ENCODE measurements at regions of chr17 and their contacts with region 1.

Region 1: GRCh38 chr17:42819944-42820535 is 4.0 kb downstream of the BECN1 start:
- DNase-seq: peak; percentile 88
- H3K4me3 Mint-ChIP-seq: no peak overlapping the region
- H3K27ac Mint-ChIP-seq: no peak overlapping the region
- H3K4me1 Mint-ChIP-seq: peaks cover 20% of the 10 kb centered on the region
- H3K27me3 Mint-ChIP-seq: no peaks in the 10 kb centered on the region

Region 2: DNA sequence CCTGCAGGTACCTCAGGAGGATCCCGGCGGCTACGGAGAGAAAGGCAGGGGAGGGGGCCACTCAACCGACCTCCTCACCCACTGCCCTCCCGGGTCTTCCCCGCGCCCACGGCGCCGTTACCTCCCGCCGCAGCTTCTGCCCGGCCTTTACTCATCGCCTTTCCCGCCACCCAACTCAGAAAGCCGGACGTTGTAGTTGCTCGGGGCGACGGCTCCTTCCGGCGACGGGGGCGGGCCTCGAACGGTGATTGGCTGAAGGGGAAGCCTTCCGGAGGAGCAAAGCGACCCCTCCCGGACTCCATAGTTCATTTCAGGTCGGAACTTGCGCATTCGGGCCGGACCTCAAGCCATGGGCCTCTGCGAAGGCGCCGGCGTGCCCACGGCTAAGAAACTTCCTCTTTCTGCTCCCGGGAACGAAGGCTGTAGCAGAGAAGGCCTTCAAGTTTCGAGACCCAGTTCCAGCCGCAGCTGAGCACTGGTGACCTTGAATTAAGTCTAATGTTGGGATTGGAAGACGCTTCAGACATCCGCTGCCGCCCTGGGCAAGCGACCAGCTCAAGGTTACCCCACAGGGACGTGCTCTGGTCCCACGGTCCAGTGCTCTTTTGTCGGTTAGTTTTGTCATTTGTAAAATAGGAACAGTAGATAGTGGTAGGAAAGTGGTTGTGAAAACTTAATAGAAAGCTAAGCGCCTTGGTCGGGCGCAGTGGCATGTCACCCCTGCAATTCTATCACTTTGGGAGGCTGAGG is 242.3 kb before region 1 on chr17 and contains the start of gene PSMC3IP:
- intact Hi-C with region 1: loop called (anchors 5 kb)
- DNase-seq: peak; percentile 98
- H3K4me3 Mint-ChIP-seq: peak within 1 kb of the TSS; percentile 88
- H3K27ac Mint-ChIP-seq: peak within 1 kb of the TSS; percentile 96
- H3K4me1 Mint-ChIP-seq: peaks cover 30% of the 10 kb centered on the region
- H3K27me3 Mint-ChIP-seq: no peaks in the 10 kb centered on the region
- total RNA-seq, gene PSMC3IP: 29.1 and 31.1 TPM in 2 replicates

Region 3: GRCh38 chr17:42609182-42609813 is 210.7 kb before region 1 on chr17 and contains the starts of genes RETREG3 and TUBG1:
- intact Hi-C with region 1: loop called (anchors 1 kb)
- DNase-seq: peak; percentile 100
- H3K4me3 Mint-ChIP-seq: peak within 1 kb of the TSS; percentile 99
- H3K27ac Mint-ChIP-seq: peak within 1 kb of the TSS; percentile 94
- H3K4me1 Mint-ChIP-seq: peaks cover 30% of the 10 kb centered on the region
- H3K27me3 Mint-ChIP-seq: no peaks in the 10 kb centered on the region
- total RNA-seq, gene RETREG3: 35.8 and 38.3 TPM in 2 replicates
- total RNA-seq, gene TUBG1: 99.9 and 100 TPM in 2 replicates

Region 4: GRCh38 chr17:42720996-42721583 is 99.0 kb before region 1 on chr17:
- intact Hi-C with region 1: loop called (anchors 10 kb)
- DNase-seq: peak; percentile 82
- H3K4me3 Mint-ChIP-seq: no peak overlapping the region
- H3K27ac Mint-ChIP-seq: no peak overlapping the region
- H3K4me1 Mint-ChIP-seq: no peaks in the 10 kb centered on the region
- H3K27me3 Mint-ChIP-seq: no peaks in the 10 kb centered on the region

Region 5: DNA sequence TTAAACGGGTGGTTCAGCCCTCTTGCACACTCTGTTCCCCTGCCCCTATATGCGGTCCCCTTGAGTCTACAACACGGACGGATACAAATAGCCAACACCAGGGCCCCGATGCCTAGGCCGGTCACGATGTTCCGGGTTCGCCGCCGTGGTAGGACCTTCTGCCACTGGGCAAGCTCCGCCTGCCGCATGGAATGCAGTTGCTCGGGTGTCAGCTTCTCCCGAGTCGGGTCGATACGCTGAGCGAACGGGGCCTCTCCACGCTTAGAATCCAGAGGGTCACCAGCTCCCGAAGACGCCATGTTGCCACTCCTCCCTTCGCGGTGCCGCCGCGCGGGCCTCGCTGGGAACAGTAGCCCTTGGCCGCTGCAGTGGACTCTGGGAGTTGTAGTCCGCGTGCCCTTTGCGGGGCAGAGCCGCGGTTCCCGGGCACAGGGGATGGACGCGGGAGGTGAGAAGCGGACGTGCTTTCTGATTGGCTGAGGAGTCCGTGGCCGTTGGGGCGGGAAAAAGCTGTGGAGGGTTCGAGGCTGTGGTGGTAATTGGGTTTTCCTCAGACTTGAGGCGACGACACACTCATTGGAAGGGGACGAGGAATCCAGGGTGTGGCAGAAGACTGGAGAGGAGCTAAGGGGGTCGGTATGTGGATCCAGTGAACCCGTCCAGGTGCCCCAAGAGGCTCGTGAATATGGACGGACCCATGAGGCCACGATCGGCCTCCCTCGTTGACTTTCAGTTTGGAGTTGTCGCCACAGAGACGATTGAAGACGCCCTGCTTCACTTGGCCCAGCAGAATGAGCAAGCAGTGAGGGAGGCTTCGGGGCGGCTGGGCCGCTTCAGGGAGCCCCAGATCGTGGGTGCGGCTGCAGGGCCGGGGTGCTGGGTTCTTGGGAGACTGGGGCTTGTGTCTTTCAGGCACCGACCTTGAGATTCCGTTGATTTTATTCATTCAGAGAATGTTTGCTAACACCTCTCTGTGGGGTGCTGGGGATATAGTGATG is 21.4 kb before region 1 on chr17 and contains the starts of genes CNTD1 and COA3:
- intact Hi-C with region 1: loop called (anchors 1 kb)
- DNase-seq: peak; percentile 95
- H3K4me3 Mint-ChIP-seq: peak within 1 kb of the TSS; percentile 95
- H3K27ac Mint-ChIP-seq: peak within 1 kb of the TSS; percentile 73
- H3K4me1 Mint-ChIP-seq: peaks cover 16% of the 10 kb centered on the region
- H3K27me3 Mint-ChIP-seq: peaks cover 12% of the 10 kb centered on the region
- total RNA-seq, gene CNTD1: not detected in 2 replicates
- total RNA-seq, gene COA3: 50.4 and 50.7 TPM in 2 replicates

Region 6: DNA sequence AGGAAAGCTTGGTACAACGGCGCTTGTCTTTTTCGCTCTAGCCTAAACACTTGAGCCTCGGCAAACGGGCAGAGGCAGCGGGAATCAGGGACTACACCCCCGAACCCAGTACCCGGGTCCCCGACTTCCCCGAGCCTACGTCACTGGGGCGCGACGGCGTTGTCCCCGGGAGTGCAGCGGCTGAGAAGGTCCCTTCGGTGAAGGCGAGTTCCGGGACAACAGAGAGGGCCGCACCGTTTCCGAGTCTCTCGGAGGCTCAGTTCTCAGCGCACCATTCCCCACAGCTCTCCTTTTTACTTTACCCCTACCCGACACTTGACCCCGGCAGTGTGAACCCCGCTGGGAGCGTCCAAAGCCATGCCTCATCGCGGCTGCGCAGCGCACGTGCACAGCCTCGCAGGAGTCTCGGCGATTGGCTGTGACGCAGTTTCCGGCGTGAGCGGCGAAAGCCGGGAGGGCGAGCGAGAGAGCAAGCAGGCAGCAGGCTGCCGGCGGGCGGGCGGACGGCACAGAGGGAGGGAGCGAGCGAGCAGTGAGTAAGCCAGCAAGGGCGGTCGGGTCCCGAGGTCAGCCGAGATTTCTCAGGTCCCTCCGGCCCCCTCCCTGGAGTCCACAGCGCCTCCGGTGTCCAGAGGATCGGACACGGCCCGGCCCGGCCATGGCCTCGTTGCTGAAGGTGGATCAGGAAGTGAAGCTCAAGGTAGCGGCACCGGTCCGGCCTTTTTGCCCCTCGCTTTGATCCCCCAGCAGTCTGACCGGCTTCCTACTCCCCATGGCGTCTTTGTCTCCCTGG is 13.1 kb after region 1 on chr17 and contains the start of gene PSME3:
- intact Hi-C with region 1: loop called (anchors 1 kb)
- DNase-seq: peak; percentile 98
- H3K4me3 Mint-ChIP-seq: peak within 1 kb of the TSS; percentile 98
- H3K27ac Mint-ChIP-seq: peak within 1 kb of the TSS; percentile 99
- H3K4me1 Mint-ChIP-seq: peaks cover 18% of the 10 kb centered on the region
- H3K27me3 Mint-ChIP-seq: peaks cover 8% of the 10 kb centered on the region
- total RNA-seq, gene PSME3: 232 and 250 TPM in 2 replicates

Region 7: GRCh38 chr17:42928714-42929496 is 108.9 kb after region 1 on chr17:
- intact Hi-C with region 1: loop called (anchors 5 kb)
- DNase-seq: peak; percentile 70
- H3K4me3 Mint-ChIP-seq: no peak overlapping the region
- H3K27ac Mint-ChIP-seq: peak overlapping the region; percentile 25
- H3K4me1 Mint-ChIP-seq: peaks cover 10% of the 10 kb centered on the region
- H3K27me3 Mint-ChIP-seq: peaks cover 2% of the 10 kb centered on the region

Region 8: DNA sequence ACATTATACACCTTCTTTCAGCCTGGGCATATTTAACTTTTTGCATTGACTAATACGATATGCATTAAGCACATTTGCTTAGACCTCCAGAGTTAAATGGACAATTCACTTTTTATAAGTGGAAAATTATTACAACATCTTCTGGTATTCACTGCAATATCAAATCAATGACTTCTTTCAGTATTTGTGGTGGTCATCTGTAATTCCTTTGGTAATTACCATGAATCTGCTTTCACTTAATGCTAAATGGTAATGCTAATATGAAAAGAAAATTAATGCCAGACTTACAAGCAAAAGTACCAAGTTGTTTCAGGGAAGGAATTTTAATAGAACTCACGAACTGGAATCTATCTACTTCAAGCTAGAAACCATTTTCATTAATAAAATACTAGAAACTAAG is 1676.8 kb after region 1 on chr17:
- intact Hi-C with region 1: no loop called
- DNase-seq: no peak
- H3K4me3 Mint-ChIP-seq: no peak overlapping the region
- H3K27ac Mint-ChIP-seq: no peak overlapping the region
- H3K4me1 Mint-ChIP-seq: peaks cover 20% of the 10 kb centered on the region
- H3K27me3 Mint-ChIP-seq: no peaks in the 10 kb centered on the region